ENCODE measurements at regions of chr5 and their contacts with region 1.

Region 1: GRCh38 chr5:36690041-36690961 is 83.9 kb downstream of the SLC1A3 start:
- DNase-seq: peak; percentile 48 to 62
- ATAC-seq: peak; percentile 75 to 77
- H3K4me3 ChIP-seq: peak overlapping the region; percentile 52 to 77 (median 63)
- H3K27ac ChIP-seq: peak overlapping the region; percentile 33 to 64 (median 54)
- H3K4me1 ChIP-seq: peaks cover 5 to 24% of the 10 kb centered on the region in 2 donors
- H3K27me3 ChIP-seq: no peaks in the 10 kb centered on the region
- CTCF ChIP-seq: peak; percentile 52 to 87 (median 68)
- POLR2A ChIP-seq: no peak

Region 2: GRCh38 chr5:36151434-36152323 is 538.6 kb before region 1 on chr5 and contains the starts of genes LMBRD2 and SKP2:
- in situ Hi-C with region 1: no loop called
- intact Hi-C with region 1: loop called (anchors 10 kb)
- DNase-seq: peak; percentile 96
- ATAC-seq: peak; percentile 99
- H3K4me3 ChIP-seq: peak within 1 kb of the TSS; percentile 89 to 99 (median 92)
- H3K27ac ChIP-seq: peak within 1 kb of the TSS; percentile 88 to 95 (median 92)
- H3K4me1 ChIP-seq: peaks cover 32 to 41% of the 10 kb centered on the region in 2 donors
- H3K27me3 ChIP-seq: no peaks in the 10 kb centered on the region
- CTCF ChIP-seq: no peak
- POLR2A ChIP-seq: peak; percentile 58 to 74
- total RNA-seq, gene LMBRD2: 12.2 to 29.0 (median 21.3) TPM
- total RNA-seq, gene SKP2: 2.8 to 6.7 (median 3.1) TPM

Region 3: GRCh38 chr5:36241631-36242533 is 448.4 kb before region 1 on chr5 and contains the start of gene NADK2:
- in situ Hi-C with region 1: no loop called
- intact Hi-C with region 1: loop called (anchors 5 kb)
- DNase-seq: peak; percentile 92 to 93
- ATAC-seq: peak; percentile 89
- H3K4me3 ChIP-seq: peak within 1 kb of the TSS; percentile 86 to 99 (median 95)
- H3K27ac ChIP-seq: peak within 1 kb of the TSS; percentile 96 to 99 (median 98)
- H3K4me1 ChIP-seq: peaks cover 38 to 44% of the 10 kb centered on the region in 2 donors
- H3K27me3 ChIP-seq: no peaks in the 10 kb centered on the region
- CTCF ChIP-seq: peak; percentile 48 to 79 (median 76)
- POLR2A ChIP-seq: peak; percentile 84 to 95
- total RNA-seq, gene NADK2: 23.6 to 34.4 (median 27.8) TPM

Region 4: DNA sequence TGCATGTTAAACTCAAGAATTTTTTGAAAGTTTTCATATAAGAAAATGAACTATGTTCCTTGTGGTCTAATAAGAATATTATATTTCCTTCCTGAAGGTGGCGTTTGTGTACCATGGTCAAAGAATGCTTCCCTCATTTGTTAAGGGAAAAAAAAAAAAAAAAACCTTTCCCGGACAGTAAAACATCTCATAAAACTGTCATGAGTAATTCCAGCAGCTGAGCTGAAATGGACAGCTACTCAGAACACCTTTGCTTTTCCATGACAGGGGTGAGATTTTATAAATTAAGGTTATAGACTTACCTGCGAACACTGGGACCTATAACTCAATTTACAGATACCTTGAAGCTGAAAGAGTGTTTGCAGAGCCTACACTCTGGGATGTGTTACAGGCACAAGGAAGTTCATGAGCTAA is 275.4 kb before region 1 on chr5:
- in situ Hi-C with region 1: loop called (anchors 5 to 10 kb)
- intact Hi-C with region 1: loop called (anchors 1 kb)
- DNase-seq: no peak
- ATAC-seq: peak; percentile 66 to 70
- H3K4me3 ChIP-seq: no peak overlapping the region
- H3K27ac ChIP-seq: no peak overlapping the region
- H3K4me1 ChIP-seq: no peaks in the 10 kb centered on the region
- H3K27me3 ChIP-seq: no peaks in the 10 kb centered on the region
- CTCF ChIP-seq: peak in 4 of 5 experiments; percentile 35 to 59 (median 46)
- POLR2A ChIP-seq: no peak

Region 5: GRCh38 chr5:36492998-36493655 is 197.2 kb before region 1 on chr5:
- in situ Hi-C with region 1: no loop called
- intact Hi-C with region 1: no loop called
- DNase-seq: no peak
- ATAC-seq: no peak
- H3K4me3 ChIP-seq: no peak overlapping the region
- H3K27ac ChIP-seq: no peak overlapping the region
- H3K4me1 ChIP-seq: no peaks in the 10 kb centered on the region
- H3K27me3 ChIP-seq: peaks cover 0 to 5% (median 0%) of the 10 kb centered on the region in 3 donors
- CTCF ChIP-seq: no peak
- POLR2A ChIP-seq: no peak

Region 6: DNA sequence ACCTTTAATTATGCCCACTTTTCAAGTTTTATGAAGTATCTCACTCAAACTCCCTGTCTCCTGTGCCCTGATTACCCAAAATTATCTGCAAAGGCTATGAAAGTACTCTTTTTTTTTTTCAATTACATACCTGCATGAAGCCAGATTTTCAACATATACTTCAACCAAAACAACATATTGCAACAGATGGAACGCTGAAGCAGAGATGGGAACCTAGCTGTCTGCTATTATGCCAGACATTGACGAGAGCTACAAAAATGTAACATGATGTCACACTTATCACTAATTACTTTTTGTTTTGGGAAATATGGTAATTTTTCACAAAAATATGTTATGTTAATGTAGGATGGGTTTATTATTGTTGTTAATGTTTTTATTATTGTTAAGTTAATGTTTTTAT is 170.4 kb before region 1 on chr5:
- in situ Hi-C with region 1: loop called in 2 of 4 experiments (anchors 10 to 25 kb)
- intact Hi-C with region 1: no loop called
- DNase-seq: no peak
- ATAC-seq: no peak
- H3K4me3 ChIP-seq: no peak overlapping the region
- H3K27ac ChIP-seq: no peak overlapping the region
- H3K4me1 ChIP-seq: peaks cover 11 to 15% of the 10 kb centered on the region in 2 donors
- H3K27me3 ChIP-seq: no peaks in the 10 kb centered on the region
- CTCF ChIP-seq: no peak
- POLR2A ChIP-seq: no peak

Region 7: DNA sequence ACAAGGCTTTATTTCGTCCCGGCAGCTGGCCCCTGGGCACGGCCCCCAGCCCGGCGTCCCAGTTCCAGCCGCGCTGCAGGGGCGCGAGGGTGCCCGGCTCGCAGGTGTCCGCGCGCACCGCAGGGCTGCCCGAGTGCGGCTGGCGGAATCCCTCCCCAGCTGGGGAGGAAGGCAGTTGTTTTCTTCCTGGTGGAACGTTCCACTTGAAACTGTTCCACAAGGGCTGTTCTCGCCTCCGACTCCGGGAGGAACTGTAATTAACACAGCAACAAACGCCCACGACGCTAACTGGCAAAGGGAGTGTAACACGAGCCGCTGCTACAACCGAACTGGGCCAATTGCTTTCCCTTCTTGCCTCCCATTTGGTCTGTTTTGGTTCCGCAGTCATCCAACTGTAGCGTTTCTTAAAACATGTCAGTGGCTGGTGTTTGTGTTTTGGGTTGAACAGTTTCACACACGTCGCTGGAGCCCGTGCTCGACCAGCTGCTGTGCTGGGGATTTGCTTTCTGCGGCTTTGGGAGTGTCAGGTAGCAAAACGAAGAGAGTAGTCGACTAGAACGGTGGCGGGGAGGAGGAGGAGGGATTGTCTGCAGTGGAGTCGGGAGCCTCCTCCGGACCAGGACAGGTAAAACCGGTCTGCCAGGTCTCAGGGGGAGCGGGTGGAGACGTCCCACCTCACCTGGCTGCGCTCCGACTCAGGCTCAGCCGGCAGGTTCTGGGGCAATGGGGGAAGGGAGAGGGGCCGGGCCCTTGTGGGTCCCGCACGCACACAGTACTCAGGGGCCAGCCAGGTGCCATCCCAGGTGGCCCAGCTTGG is 54.7 kb after region 1 on chr5:
- in situ Hi-C with region 1: no loop called
- intact Hi-C with region 1: no loop called
- DNase-seq: peak; percentile 8 to 16
- ATAC-seq: peak; percentile 79 to 84
- H3K4me3 ChIP-seq: peak overlapping the region; percentile 57 to 68 (median 66)
- H3K27ac ChIP-seq: peak overlapping the region; percentile 55 to 74 (median 66)
- H3K4me1 ChIP-seq: peaks cover 8 to 16% of the 10 kb centered on the region in 2 donors
- H3K27me3 ChIP-seq: no peaks in the 10 kb centered on the region
- CTCF ChIP-seq: peak in 2 of 5 experiments; percentile 14 to 53
- POLR2A ChIP-seq: no peak